K562 (cell line): ENCODE measurements at regions of chr7 and their contacts with region 1.

Region 1: DNA sequence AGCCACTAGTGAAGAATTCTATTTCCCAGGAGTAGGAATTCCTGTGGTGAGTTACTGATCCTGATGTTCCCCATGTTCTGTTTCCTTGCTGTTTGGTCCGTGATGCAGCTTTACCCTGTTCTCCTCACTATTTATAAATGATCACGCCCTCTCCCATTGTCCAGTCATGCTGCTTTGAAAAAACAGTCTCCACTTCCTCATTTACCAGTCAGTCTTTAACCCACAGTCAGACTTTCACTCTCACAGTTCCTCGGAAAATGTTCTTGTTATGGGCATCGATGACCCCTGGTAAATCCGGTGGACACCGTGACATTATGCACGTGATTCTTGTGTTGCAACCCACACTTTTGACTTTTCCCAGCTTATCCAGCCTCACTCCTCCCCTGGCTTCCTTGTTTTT is 14.4 kb downstream of the SCIN start:
- DNase-seq: peak in 1 of 4 experiments; percentile 53
- ATAC-seq: peak; percentile 62
- H3K4me3 ChIP-seq: no peak overlapping the region
- H3K27ac ChIP-seq: peak overlapping the region; percentile 73
- H3K4me1 ChIP-seq: peaks cover 6 to 37% of the 10 kb centered on the region in 2 experiments; a peak in 4 of 5 replicates
- H3K27me3 ChIP-seq: no peaks in the 10 kb centered on the region
- CTCF ChIP-seq: no peak
- EP300 ChIP-seq: no peak
- POLR2A ChIP-seq: no peak
- RAD21 ChIP-seq: no peak

Region 2: DNA sequence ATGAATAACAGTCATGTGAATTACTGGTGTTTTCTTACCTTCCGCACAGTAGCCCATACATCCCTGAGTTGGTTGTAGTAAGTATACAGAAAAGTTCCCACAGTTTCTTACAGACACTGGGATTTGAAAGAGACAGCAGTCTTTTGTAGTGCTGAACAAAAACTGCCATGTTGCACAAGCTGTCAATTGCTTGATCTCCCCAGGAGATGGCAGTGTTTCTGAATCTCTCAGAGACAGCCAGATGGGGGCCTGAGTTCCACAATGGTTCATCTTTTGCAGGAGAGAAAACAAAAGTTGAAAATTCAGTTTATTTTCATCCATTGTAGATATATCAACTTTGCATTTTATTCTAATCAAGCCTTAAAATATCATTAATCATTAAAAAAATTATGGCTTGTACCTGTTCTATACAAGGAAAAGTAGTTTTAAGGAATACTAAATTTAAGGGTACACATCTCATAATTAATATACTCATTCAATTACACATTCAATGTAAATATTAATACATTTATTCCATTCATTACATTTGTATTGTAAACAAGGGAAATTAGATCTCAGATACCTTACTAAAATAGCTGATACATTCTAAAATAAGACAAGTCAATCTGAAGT is 195.7 kb before region 1 on chr7:
- CTCF ChIA-PET with region 1: no interaction called
- POLR2A ChIA-PET with region 1: no interaction called
- in situ Hi-C with region 1: no loop called
- intact Hi-C with region 1: loop called (anchors 10 kb)
- DNase-seq: peak; percentile 37 to 79 (median 54)
- ATAC-seq: peak; percentile 57
- H3K4me3 ChIP-seq: no peak overlapping the region
- H3K27ac ChIP-seq: no peak overlapping the region
- H3K4me1 ChIP-seq: peaks cover 8 to 37% of the 10 kb centered on the region in 2 experiments
- H3K27me3 ChIP-seq: no peaks in the 10 kb centered on the region
- CTCF ChIP-seq: peak; percentile 67 to 95 (median 76)
- EP300 ChIP-seq: no peak
- POLR2A ChIP-seq: no peak
- RAD21 ChIP-seq: peak in 1 of 2 experiments; percentile 52; a peak in 2 of 4 replicates

Region 3: GRCh38 chr7:12524794-12525386 is 60.0 kb before region 1 on chr7:
- CTCF ChIA-PET with region 1: no interaction called
- POLR2A ChIA-PET with region 1: no interaction called
- in situ Hi-C with region 1: no loop called
- intact Hi-C with region 1: loop called (anchors 5 kb)
- DNase-seq: peak; percentile 20 to 63 (median 34)
- ATAC-seq: peak; percentile 77
- H3K4me3 ChIP-seq: no peak overlapping the region
- H3K27ac ChIP-seq: no peak overlapping the region
- H3K4me1 ChIP-seq: no peaks in the 10 kb centered on the region
- H3K27me3 ChIP-seq: no peaks in the 10 kb centered on the region
- CTCF ChIP-seq: peak; percentile 20 to 81 (median 51); a peak in 3 of 6 replicates
- EP300 ChIP-seq: no peak
- POLR2A ChIP-seq: no peak
- RAD21 ChIP-seq: peak; percentile 91 to 92

Region 4: DNA sequence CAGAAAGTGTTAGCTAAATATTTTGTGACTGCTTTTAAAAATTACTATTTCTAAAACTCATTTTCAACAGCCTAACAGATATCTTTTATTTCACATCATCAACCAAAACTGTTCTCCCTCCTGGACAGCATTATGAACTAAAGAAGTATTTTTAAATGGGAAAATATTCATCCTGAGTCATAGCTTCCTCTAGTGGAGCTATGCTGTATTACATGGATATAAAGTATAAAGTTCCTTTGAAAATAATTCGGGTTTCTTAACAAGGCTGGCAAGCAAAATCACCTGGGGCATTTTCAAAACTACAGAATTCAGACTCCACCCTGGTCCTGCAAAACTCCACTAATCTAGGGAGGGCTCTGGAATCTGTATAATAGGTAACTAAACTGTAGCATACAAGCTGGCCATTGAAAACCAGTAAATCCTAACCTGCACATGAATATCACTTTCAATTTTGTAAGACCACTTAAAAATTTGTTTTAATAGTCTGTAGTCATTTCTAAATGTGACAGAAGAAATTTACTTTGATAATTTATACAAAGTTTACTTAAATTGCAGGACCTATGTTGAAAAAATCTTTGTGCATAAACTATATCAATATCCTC is 39.1 kb after region 1 on chr7:
- CTCF ChIA-PET with region 1: no interaction called
- POLR2A ChIA-PET with region 1: interaction called, 3 read pairs
- in situ Hi-C with region 1: no loop called
- intact Hi-C with region 1: loop called (anchors 5 kb)
- DNase-seq: peak; percentile 19 to 49 (median 24)
- ATAC-seq: peak; percentile 78
- H3K4me3 ChIP-seq: no peak overlapping the region
- H3K27ac ChIP-seq: no peak overlapping the region; the same call in 2 of the 3 replicates
- H3K4me1 ChIP-seq: peaks cover 0 to 10% of the 10 kb centered on the region in 2 experiments; a peak in 2 of 5 replicates
- H3K27me3 ChIP-seq: no peaks in the 10 kb centered on the region
- CTCF ChIP-seq: peak; percentile 57 to 88 (median 74); a peak in 5 of 6 replicates
- EP300 ChIP-seq: no peak
- POLR2A ChIP-seq: no peak
- RAD21 ChIP-seq: peak; percentile 88 to 92